GM12878 (cell line): ENCODE measurements at regions of chr1 and their contacts with region 1.

Region 1: DNA sequence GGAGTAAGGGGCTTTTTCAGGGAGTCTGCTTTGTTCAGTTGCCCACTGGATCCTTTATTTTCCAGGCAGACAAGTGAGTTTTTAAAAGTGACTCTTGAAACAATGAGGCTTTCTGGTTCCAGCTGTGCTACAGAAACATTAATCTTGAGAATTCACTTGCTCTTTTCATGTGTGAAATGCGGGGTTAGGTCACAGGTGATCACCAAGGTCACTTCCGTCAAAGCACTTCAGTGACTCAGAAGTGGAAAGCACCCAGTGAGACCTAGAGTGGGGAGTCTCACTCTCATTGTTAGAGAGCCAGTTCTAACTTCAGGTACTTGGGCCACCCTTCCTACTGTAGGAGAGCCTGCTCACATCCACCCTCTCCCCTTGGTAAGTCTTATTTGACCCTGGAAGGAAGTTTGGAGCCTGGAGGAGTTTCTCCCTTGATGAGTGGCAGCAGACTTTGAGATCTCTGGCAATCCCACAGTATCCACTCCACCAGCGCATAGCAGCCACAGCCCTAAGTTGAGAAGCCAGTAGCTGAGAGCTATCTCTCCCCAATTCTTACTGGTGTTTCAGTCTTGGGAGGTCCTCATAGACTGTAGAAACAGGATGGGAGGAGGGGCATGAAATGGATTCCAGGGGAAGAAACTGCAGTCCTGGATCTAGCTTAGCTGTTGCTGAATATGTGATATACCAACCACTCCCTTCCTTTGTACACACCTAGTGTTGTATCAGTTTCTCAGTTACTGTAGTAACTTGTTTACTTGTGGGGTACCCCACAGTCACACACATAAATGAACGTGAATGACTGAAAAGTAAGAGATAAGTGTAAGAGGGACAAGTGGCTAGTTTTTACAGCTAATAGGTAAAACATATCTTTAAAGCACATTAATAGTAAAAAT is 3.1 kb downstream of the TACSTD2 start:
- DNase-seq: peak; percentile 93
- ATAC-seq: peak; percentile 95
- H3K4me3 ChIP-seq: 0 out of 2 replicates have a peak overlapping the region, but pooled peaks have one; percentile 6
- H3K27ac ChIP-seq: peak overlapping the region; percentile 72
- H3K4me1 ChIP-seq: peaks cover 44% of the 10 kb centered on the region
- H3K27me3 ChIP-seq: no peaks in the 10 kb centered on the region
- CTCF ChIP-seq: no peak
- EP300 ChIP-seq: peak; percentile 95 to 98
- POLR2A ChIP-seq: peak; percentile 70
- RAD21 ChIP-seq: peak; percentile 20; the same call in 1 of the 2 replicates

Region 2: DNA sequence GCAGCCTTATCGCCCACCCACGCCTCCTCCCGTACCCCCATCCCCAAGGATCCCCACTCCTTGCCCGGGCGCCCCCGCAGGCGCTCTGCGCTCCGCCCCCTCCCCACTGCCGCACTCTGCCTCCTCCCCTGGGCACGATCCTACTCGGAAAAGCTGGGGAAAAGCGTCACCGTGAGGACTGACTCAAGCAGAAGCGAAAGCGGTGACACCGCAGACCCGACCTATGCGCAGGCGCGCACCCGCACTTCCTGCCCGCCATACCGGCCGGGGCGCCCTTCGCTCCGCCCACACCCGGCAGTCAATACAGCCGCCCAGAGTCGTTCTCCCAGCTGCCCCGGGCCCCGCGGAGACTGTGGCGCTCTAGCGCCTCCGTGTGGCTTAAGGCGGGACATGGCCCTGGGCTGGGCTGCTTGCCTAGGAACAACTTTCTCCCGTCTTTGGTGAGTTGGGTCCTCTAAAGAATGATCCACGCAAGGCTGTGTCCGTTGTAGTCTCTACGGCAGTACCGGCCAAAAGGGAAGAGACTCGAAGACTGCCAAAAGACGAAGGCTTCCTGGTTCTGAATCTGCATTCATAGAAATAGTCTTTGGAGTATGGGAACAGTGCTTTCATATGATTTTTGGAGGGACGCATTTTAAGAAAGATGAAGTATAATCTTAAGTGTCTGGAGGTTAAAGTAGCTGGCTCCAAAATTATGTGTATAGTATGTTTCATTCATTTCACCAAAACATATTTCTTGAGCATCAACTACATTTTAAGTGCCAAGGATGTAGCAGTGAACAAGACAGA is 27.2 kb before region 1 on chr1 and contains the start of gene OMA1:
- CTCF ChIA-PET with region 1: interaction called, 13 read pairs
- POLR2A ChIA-PET with region 1: no interaction called
- RAD21 ChIA-PET with region 1: interaction called, 12 read pairs
- SMC1A ChIA-PET with region 1: interaction called, 6 read pairs
- in situ Hi-C with region 1: no loop called
- intact Hi-C with region 1: loop called (anchors 1 kb)
- DNase-seq: peak; percentile 83
- ATAC-seq: peak; percentile 97
- H3K4me3 ChIP-seq: peak within 1 kb of the TSS; percentile 93
- H3K27ac ChIP-seq: peak within 1 kb of the TSS; percentile 67
- H3K4me1 ChIP-seq: no peaks in the 10 kb centered on the region
- H3K27me3 ChIP-seq: no peaks in the 10 kb centered on the region
- CTCF ChIP-seq: peak; percentile 98 to 99 (median 98); a peak in 5 of 6 replicates
- EP300 ChIP-seq: no peak
- POLR2A ChIP-seq: peak; percentile 98
- RAD21 ChIP-seq: peak; percentile 94
- polyA plus RNA-seq, gene OMA1: 48.3 to 53.4 TPM

Region 3: DNA sequence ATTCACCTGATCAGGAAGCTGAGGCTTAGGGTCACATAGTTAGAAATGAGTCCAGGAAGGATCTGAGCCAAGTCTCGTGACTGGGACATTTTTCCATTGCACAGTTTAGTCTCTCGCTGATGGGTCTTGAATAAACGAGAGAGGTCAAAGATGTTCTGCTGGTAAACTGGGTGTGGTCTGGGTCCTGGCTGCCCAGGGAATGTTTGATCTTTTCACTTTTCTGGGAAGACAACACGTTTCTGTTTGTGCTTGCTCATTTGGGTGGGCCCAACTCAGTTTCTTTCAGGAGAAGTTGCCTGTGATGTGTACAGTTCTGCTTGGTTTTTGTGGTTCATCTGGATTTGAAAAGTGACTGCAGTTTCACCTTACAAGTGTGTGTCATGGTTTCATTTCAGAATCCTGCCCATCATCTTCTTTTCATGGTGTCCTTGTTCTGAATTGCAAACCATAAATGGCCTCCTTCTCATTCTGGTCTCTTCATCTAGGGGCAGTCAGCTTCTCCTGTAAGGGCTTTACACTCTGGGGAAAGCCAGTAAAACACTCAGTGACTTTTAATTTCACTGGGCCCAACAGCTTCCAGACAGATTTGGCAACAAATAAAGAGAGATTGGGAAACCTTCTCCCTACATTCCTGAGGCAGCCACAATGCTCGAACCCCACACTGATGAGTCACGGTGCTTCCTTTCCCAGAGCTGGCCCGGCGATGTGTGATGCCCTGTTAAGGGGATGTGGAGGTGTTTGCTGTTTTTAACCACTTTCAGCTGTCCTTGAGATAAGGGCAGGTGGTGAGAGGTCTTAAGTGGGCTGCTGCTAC is 10.3 kb after region 1 on chr1:
- CTCF ChIA-PET with region 1: no interaction called
- POLR2A ChIA-PET with region 1: interaction called, 4 read pairs
- RAD21 ChIA-PET with region 1: interaction called, 3 read pairs
- SMC1A ChIA-PET with region 1: interaction called, 17 read pairs
- in situ Hi-C with region 1: no loop called
- intact Hi-C with region 1: loop called (anchors 1 kb)
- DNase-seq: no peak
- ATAC-seq: peak; percentile 86
- H3K4me3 ChIP-seq: 0 out of 2 replicates have a peak overlapping the region, but pooled peaks have one; percentile 35
- H3K27ac ChIP-seq: peak overlapping the region; percentile 51
- H3K4me1 ChIP-seq: peaks cover 21% of the 10 kb centered on the region
- H3K27me3 ChIP-seq: no peaks in the 10 kb centered on the region
- CTCF ChIP-seq: no peak
- EP300 ChIP-seq: no peak
- POLR2A ChIP-seq: no peak
- RAD21 ChIP-seq: no peak

Region 4: GRCh38 chr1:58739856-58740466 is 166.0 kb after region 1 on chr1:
- CTCF ChIA-PET with region 1: no interaction called
- POLR2A ChIA-PET with region 1: no interaction called
- RAD21 ChIA-PET with region 1: no interaction called
- SMC1A ChIA-PET with region 1: no interaction called
- in situ Hi-C with region 1: no loop called
- intact Hi-C with region 1: no loop called
- DNase-seq: no peak
- ATAC-seq: peak; percentile 74
- H3K4me3 ChIP-seq: no peak overlapping the region
- H3K27ac ChIP-seq: no peak overlapping the region
- H3K4me1 ChIP-seq: no peaks in the 10 kb centered on the region
- H3K27me3 ChIP-seq: peaks cover 0 to 3% of the 10 kb centered on the region in 2 experiments; a peak in 2 of 4 replicates
- CTCF ChIP-seq: peak; percentile 48 to 79 (median 72); a peak in 5 of 6 replicates
- EP300 ChIP-seq: no peak
- POLR2A ChIP-seq: no peak
- RAD21 ChIP-seq: peak; percentile 99